OCI-LY7 (cell line): ENCODE measurements at regions of chr12 and their contacts with region 1.

Region 1: DNA sequence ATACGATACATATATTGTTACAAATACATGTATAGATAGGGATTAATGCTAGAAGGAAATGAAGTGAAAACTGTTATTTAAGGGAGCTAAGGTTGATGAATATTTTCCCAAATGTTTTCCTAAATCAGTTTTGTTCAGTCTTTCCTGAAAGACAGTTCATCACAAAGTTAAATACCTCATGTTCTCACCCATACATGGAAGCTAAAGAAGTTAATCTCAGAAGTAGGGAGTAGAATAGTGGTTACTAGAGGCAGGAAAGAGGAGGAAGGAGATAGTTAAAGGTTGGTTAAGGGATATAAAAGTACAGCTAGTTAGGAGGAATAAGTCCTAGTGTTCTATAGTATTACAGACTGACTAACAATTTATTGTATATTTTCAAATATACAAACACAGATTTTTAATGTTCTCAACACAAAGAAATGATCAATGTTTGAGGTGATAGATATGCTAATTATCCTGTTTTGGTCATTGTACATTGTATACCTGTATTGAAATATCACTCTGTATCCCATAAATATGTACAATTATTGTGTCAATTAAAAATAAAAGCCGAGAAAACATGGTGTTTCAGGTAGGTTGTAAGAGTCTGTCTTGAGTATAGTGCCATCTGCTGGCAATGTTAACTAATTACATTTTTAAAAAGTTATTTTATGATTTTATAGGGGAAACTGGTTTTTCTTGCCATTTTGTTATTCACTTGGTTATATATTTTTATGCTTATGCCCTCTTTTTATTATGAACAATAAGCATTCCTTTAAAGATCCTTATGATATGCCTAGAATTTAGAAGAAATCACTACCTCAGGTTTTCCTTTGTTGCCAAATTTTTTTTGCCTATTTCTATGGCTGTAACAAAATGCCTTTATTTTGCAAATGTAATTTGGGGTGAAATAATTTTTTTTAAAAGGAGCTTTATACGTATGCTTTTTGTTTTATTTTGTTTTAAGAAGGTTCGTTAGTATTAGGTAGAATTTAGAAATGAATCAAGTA is 26.9 kb downstream of the ZDHHC17 start:
- DNase-seq: peak; percentile 58
- H3K4me3 ChIP-seq: no peak overlapping the region
- H3K27ac ChIP-seq: no peak overlapping the region
- H3K4me1 ChIP-seq: no peaks in the 10 kb centered on the region
- CTCF ChIP-seq: peak; percentile 88

Region 2: GRCh38 chr12:75705749-75706711 is 1084.8 kb before region 1 on chr12:
- CTCF ChIA-PET with region 1: no interaction called
- POLR2A ChIA-PET with region 1: no interaction called
- intact Hi-C with region 1: no loop called
- DNase-seq: no peak
- H3K4me3 ChIP-seq: no peak overlapping the region
- H3K27ac ChIP-seq: no peak overlapping the region
- H3K4me1 ChIP-seq: peaks cover 6% of the 10 kb centered on the region
- CTCF ChIP-seq: no peak

Region 3: DNA sequence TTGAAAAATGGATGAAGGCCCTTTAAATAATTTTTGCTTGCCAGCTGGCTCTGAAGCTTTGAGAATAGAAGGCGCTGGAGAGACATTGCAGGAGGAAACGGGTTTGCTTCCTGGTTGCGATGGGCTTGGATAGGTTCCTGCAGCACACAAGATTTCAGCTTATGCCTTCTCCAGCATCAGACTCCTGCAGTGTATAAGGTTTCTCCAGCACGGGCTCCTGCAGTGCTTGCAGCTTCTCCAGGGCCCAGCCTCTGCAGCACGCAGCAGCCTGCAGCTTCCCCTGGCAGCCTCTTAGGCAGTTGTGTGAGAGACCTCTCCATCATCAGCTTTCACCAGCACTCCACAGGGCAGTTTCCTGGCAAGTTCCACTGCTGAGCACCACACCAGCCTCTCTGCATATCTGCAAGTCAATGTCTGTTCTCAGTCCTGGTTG is 105.6 kb before region 1 on chr12:
- CTCF ChIA-PET with region 1: no interaction called
- POLR2A ChIA-PET with region 1: no interaction called
- intact Hi-C with region 1: loop called (anchors 5 kb)
- DNase-seq: no peak
- H3K4me3 ChIP-seq: no peak overlapping the region
- H3K27ac ChIP-seq: no peak overlapping the region
- H3K4me1 ChIP-seq: no peaks in the 10 kb centered on the region
- CTCF ChIP-seq: no peak

Region 4: DNA sequence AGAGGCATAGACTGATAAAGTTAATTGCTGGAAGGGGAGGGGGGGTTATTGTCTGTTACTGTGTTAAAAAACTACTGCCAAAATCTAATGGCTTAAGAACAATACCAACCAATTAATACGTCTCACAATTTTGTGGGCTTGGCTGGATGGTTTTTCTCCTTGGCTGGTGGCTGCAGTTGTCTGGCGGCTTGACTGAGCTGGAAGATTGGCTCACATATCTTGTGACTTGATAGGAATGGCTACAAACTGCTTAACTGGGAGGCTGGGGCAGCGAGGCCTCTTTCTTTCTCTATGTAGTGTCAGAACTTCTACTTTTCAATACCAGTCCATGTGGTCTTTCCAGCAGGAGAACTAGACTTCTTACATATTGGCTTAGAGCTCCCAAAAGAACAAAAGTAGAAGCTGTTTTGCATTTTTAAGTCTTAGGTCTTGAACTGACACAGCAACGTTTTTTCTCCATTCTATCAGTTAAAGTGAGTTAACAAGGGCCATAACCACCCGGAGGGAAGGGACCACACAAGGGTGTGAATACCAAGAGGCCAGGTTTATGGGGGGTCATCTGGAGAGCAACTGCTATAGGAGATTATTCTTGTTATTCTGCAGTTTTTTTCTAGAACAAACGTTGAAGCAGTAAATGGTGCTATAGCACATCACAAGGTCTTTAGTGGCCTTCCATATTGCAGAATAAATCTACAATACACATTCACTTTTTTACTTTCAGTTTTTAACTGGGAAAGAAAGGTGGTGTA is 20.0 kb after region 1 on chr12:
- CTCF ChIA-PET with region 1: no interaction called
- POLR2A ChIA-PET with region 1: no interaction called
- intact Hi-C with region 1: no loop called
- DNase-seq: no peak
- H3K4me3 ChIP-seq: no peak overlapping the region
- H3K27ac ChIP-seq: no peak overlapping the region
- H3K4me1 ChIP-seq: no peaks in the 10 kb centered on the region
- CTCF ChIP-seq: no peak